H1 (cell line): ENCODE measurements at regions of chr11 and their contacts with region 1.

Region 1: DNA sequence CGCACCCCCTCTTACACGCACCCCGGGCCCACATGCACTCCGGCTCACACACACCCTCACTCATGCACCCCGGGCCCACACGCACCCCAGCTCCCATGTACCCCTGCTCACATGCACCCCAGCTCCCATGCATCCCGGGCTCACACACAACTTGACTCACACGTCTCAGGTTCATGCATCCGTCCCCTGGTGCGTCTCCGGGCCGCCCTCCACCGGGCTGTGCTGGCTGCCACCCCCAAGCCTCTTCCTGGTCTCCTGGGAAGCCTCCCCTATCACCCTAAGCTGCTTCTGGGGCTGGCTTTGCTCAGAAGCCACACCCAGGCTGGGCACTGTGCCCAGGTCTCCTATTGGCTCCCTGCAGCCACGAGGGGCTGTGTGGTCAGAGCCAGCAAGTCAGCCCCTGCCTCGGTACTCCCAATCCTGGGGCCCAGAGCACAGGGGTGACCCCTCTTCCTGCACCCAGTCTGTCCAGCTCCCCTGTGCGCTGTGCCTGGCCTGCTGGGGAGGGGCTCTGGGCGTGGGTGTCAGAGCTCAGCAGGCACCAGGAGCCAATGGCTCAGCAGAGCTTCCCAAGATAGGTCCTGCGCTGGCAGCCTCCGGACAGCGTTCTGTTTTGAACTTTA is 17.0 kb downstream of the TSPAN4 start:
- DNase-seq: no peak
- H3K4me3 ChIP-seq: no peak overlapping the region
- H3K27ac ChIP-seq: no peak overlapping the region
- H3K4me1 ChIP-seq: peaks cover 0 to 35% (median 30%) of the 10 kb centered on the region in 4 experiments; a peak in 6 of 7 replicates
- H3K27me3 ChIP-seq: peaks cover 0 to 2% (median 0%) of the 10 kb centered on the region in 4 experiments; a peak in 2 of 7 replicates
- CTCF ChIP-seq: no peak
- EP300 ChIP-seq: no peak
- POLR2A ChIP-seq: no peak
- RAD21 ChIP-seq: no peak

Region 2: GRCh38 chr11:723120-723883 is 136.3 kb before region 1 on chr11:
- CTCF ChIA-PET with region 1: no interaction called
- POLR2A ChIA-PET with region 1: no interaction called
- DNase-seq: no peak
- H3K4me3 ChIP-seq: no peak overlapping the region
- H3K27ac ChIP-seq: no peak overlapping the region
- H3K4me1 ChIP-seq: peaks cover 0 to 26% (median 17%) of the 10 kb centered on the region in 4 experiments; a peak in 5 of 7 replicates
- H3K27me3 ChIP-seq: peaks cover 0 to 10% (median 8%) of the 10 kb centered on the region in 4 experiments; a peak in 4 of 7 replicates
- CTCF ChIP-seq: peak in 2 of 3 experiments; percentile 33 to 62; a peak in 2 of 4 replicates
- EP300 ChIP-seq: no peak
- POLR2A ChIP-seq: no peak
- RAD21 ChIP-seq: peak; percentile 72 to 73

Region 3: GRCh38 chr11:870127-870413 is 10.4 kb after region 1 on chr11:
- CTCF ChIA-PET with region 1: interaction called, 35 read pairs
- POLR2A ChIA-PET with region 1: interaction called, 24 read pairs
- DNase-seq: no peak
- H3K4me3 ChIP-seq: no peak overlapping the region
- H3K27ac ChIP-seq: no peak overlapping the region
- H3K4me1 ChIP-seq: peaks cover 0 to 11% (median 7%) of the 10 kb centered on the region in 4 experiments; a peak in 5 of 7 replicates
- H3K27me3 ChIP-seq: no peaks in the 10 kb centered on the region
- CTCF ChIP-seq: peak in 2 of 3 experiments; percentile 31 to 38; a peak in 2 of 4 replicates
- EP300 ChIP-seq: no peak
- POLR2A ChIP-seq: no peak
- RAD21 ChIP-seq: peak in 1 of 2 experiments; percentile 24; a peak in 2 of 4 replicates

Region 4: GRCh38 chr11:876519-876918 is 16.9 kb after region 1 on chr11:
- CTCF ChIA-PET with region 1: interaction called, 4 read pairs
- POLR2A ChIA-PET with region 1: interaction called, 10 read pairs
- DNase-seq: no peak
- H3K4me3 ChIP-seq: no peak overlapping the region
- H3K27ac ChIP-seq: no peak overlapping the region; the same call in 1 of the 2 replicates
- H3K4me1 ChIP-seq: no peaks in the 10 kb centered on the region; a peak in 2 of 7 replicates
- H3K27me3 ChIP-seq: no peaks in the 10 kb centered on the region
- CTCF ChIP-seq: no peak
- EP300 ChIP-seq: no peak
- POLR2A ChIP-seq: no peak
- RAD21 ChIP-seq: no peak